ENCODE measurements at regions of chr1 and their contacts with region 1.

Region 1: DNA sequence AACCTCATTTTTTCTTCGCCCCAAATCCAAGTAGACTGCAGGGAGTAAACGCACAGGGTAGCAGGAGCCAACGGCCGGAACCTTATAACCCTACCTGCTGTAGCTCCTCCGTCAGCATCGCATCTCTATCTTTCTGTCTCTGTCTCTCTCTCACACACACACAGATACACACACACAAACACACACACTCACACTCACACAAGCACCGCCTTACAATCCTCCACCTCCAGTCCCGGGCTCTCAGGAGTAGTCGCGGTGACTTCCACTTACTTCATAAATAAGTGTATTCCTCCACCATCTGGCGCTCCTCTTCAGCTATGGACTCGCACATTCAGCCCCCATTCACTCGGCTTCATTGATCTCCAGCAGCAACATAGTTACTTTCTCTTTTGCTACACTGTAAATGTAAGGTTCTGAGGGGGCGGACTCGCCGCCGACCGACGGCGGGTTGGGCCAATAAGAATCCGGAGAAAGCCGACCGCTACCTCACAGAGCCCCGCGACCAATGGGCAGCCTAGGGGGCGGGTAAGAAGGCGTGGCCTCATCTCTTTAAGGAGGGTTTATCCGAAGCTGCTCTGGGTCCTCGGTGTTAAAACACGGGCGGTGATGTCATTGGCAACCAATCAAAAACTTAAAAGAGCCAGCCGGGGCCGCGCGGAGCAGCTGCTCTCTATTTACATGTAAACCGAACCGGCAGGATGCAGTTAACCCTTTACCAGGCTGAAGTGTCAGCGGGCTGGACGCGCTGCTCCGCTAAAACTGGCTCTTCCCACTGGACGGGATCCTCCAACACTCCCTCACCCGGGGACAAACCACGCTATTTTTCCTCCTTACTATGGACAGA is at the start of gene DUSP10:
- DNase-seq: peak; percentile 99
- H3K4me3 ChIP-seq: peak within 1 kb of the TSS; percentile 63 to 85 (median 80)
- H3K27ac ChIP-seq: peak within 1 kb of the TSS; percentile 96
- H3K4me1 ChIP-seq: peaks cover 35% of the 10 kb centered on the region
- H3K27me3 ChIP-seq: no peaks in the 10 kb centered on the region
- CTCF ChIP-seq: no peak
- total RNA-seq, gene DUSP10: 35.4 to 118 TPM

Region 2: GRCh38 chr1:221371705-221372104 is 370.2 kb before region 1 on chr1:
- CTCF ChIA-PET with region 1: no interaction called
- dilution Hi-C with region 1: no loop called
- in situ Hi-C with region 1: no loop called
- intact Hi-C with region 1: no loop called
- DNase-seq: no peak
- H3K4me3 ChIP-seq: no peak overlapping the region
- H3K27ac ChIP-seq: no peak overlapping the region
- H3K4me1 ChIP-seq: no peaks in the 10 kb centered on the region
- H3K27me3 ChIP-seq: no peaks in the 10 kb centered on the region
- CTCF ChIP-seq: no peak

Region 3: GRCh38 chr1:221478050-221478949 is 263.6 kb before region 1 on chr1:
- CTCF ChIA-PET with region 1: interaction called, 5 read pairs
- dilution Hi-C with region 1: no loop called
- in situ Hi-C with region 1: loop called in 1 of 2 experiments (anchors 25 kb)
- intact Hi-C with region 1: loop called (anchors 1 kb)
- DNase-seq: peak; percentile 79
- H3K4me3 ChIP-seq: no peak overlapping the region
- H3K27ac ChIP-seq: no peak overlapping the region
- H3K4me1 ChIP-seq: peaks cover 13% of the 10 kb centered on the region
- H3K27me3 ChIP-seq: no peaks in the 10 kb centered on the region
- CTCF ChIP-seq: peak; percentile 88 to 98

Region 4: GRCh38 chr1:221801773-221802516 is 60.0 kb after region 1 on chr1:
- CTCF ChIA-PET with region 1: interaction called, 11 read pairs
- dilution Hi-C with region 1: no loop called
- in situ Hi-C with region 1: no loop called
- intact Hi-C with region 1: no loop called
- DNase-seq: peak; percentile 92
- H3K4me3 ChIP-seq: no peak overlapping the region
- H3K27ac ChIP-seq: peak overlapping the region; percentile 57
- H3K4me1 ChIP-seq: peaks cover 24% of the 10 kb centered on the region
- H3K27me3 ChIP-seq: no peaks in the 10 kb centered on the region
- CTCF ChIP-seq: no peak

Region 5: DNA sequence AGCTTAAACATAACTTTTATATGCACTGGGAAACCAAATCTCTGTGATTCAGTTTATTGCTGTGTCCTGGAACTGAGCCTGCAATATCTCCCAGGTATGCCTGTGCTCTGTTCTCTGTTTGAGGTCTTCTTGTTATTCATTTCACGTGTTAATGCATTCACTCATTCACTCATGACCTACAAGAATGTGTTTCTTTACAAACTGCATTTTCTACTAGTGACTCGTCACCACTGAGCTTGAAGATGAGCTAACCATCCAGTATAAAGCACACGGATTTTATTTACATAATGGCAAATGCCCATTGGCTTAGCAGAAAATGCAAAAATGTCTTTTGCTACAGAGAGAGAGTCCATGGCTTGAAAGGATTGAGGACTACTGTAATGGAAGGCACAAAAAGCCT is 75.0 kb after region 1 on chr1:
- CTCF ChIA-PET with region 1: no interaction called
- dilution Hi-C with region 1: no loop called
- in situ Hi-C with region 1: no loop called
- intact Hi-C with region 1: no loop called
- DNase-seq: peak; percentile 95
- H3K4me3 ChIP-seq: no peak overlapping the region
- H3K27ac ChIP-seq: peak overlapping the region; percentile 57
- H3K4me1 ChIP-seq: peaks cover 16% of the 10 kb centered on the region
- H3K27me3 ChIP-seq: no peaks in the 10 kb centered on the region
- CTCF ChIP-seq: no peak

Region 6: DNA sequence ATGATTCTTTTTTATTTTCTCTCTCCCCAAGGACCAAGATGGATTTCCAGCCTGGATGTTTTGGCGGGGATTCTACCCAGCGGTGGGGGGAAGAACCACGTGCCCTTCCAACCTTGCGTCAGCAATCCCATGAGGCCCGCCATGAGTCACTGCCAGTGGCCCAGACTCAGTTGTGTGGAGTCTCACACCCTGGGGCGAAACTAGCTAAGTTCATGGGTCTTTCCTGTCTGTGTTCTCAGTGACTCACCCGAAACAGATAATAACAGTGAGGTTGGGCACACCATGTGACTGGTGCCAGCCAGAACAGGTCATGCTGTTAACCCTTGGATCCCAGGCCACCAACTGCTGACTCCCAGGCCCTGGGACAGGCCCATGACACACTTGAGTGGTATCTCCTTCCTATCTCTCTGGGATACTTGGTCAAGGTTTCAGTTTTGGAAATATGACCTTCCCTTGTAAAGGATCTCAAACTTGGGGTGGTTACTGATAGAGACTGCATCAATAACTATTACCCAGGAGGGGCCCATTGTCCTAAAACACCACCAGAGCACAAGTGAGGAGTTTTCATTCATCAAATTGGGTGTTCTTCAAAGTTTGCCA is 98.0 kb after region 1 on chr1:
- CTCF ChIA-PET with region 1: no interaction called
- dilution Hi-C with region 1: no loop called
- in situ Hi-C with region 1: loop called in 1 of 2 experiments (anchors 5 kb)
- intact Hi-C with region 1: loop called (anchors 1 kb)
- DNase-seq: peak; percentile 100
- H3K4me3 ChIP-seq: no peak overlapping the region
- H3K27ac ChIP-seq: peak overlapping the region; percentile 97
- H3K4me1 ChIP-seq: peaks cover 31% of the 10 kb centered on the region
- H3K27me3 ChIP-seq: no peaks in the 10 kb centered on the region
- CTCF ChIP-seq: no peak

Region 7: DNA sequence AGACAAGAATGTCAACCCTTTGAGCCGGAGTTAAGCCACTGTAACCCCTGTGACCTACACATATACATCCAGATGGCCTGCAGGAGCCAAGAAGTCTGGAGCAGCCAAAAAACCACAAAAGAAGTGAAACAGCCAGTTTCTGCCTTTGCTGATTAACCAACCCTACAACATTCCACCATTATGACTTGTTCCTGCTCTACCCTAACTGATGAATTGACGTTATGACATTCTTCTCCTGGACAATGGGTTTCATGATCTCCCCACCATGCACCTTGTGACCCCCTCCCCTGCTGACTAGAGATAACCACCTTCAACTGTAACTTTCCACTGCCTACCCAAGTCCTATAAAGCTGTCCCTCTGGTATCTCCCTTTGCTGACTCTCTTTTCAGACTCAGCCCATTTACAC is 216.2 kb after region 1 on chr1:
- CTCF ChIA-PET with region 1: no interaction called
- dilution Hi-C with region 1: no loop called
- in situ Hi-C with region 1: no loop called
- intact Hi-C with region 1: loop called (anchors 5 kb)
- DNase-seq: peak; percentile 99
- H3K4me3 ChIP-seq: no peak overlapping the region
- H3K27ac ChIP-seq: peak overlapping the region; percentile 99
- H3K4me1 ChIP-seq: peaks cover 32% of the 10 kb centered on the region
- H3K27me3 ChIP-seq: no peaks in the 10 kb centered on the region
- CTCF ChIP-seq: no peak

Region 8: DNA sequence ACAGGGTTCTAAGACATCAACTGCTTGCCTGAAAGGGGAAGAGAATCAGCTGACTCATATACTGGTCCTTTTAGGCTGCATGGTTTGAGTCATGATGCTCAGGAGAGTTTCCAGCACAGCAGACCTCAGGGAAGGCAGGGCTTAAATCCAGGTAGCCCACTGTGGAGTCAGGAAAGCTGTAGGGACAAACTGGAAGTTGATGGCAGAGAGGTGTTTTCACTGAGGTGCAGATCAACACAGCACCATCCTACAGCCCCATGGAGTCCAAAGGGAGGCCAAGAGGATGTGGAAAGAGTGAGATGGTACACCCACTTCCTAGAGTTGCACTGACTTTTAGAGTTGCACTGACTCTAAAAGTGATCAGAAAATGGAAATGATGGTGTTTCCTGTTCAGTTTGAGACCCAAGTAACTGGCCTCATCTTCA is 252.4 kb after region 1 on chr1:
- CTCF ChIA-PET with region 1: no interaction called
- dilution Hi-C with region 1: no loop called
- in situ Hi-C with region 1: loop called in 1 of 2 experiments (anchors 10 kb)
- intact Hi-C with region 1: no loop called
- DNase-seq: peak; percentile 90
- H3K4me3 ChIP-seq: no peak overlapping the region
- H3K27ac ChIP-seq: peak overlapping the region; percentile 96
- H3K4me1 ChIP-seq: peaks cover 67% of the 10 kb centered on the region
- H3K27me3 ChIP-seq: no peaks in the 10 kb centered on the region
- CTCF ChIP-seq: no peak